ENCODE measurements at regions of chr13 and their contacts with region 1.

Region 1: DNA sequence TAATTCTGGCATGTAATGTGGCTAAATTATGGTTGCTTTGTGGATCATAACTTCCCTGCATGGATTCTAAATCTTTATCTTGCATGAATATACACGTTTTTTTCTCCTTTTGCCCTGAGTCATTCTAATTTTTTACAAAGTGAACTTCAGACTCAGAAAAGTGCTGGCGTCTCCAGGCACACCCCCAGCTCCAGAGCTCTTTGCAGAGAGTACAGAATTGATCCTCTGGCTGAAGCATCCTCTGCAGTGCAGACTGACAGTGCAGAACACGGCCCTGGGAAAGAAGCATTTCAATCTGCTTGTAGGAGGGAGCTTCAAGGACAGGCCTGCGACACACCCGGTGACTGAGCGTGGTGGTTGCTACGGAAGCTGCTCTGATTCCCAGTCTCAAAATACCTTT is 228.1 kb downstream of the FGF9 start:
- DNase-seq: no peak

Region 2: DNA sequence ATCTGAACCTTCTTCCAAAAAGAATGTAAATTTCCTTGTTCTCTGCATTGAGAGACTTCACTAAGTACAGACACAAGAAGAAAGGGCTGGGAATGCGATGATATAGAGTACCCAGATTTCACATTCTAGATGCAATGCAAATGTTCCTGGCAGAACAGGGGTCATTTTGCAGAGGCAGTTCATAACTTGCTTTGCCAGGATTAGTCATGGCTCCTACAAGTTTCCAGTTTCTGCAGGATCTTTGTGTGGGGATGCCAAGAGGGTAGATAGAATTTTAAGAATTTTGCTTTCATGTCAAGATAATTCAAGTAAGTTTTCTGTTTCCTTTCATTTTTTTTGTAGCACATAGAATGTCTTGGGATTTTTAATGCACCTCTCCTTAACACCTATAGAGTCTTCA is 46.9 kb before region 1 on chr13:
- intact Hi-C with region 1: loop called in 1 of 2 experiments (anchors 2 kb)
- DNase-seq: no peak

Measured in posterior vena cava (tissue), 2 donors.